ENCODE measurements at regions of chr14 and their contacts with region 1.

Region 1: GRCh38 chr14:89641495-89642175 is 224.6 kb upstream of the FOXN3 start:
- DNase-seq: peak; percentile 42
- H3K4me3 Mint-ChIP-seq: peak overlapping the region; percentile 50
- H3K27ac Mint-ChIP-seq: peak overlapping the region; percentile 93
- H3K4me1 Mint-ChIP-seq: peaks cover 65% of the 10 kb centered on the region
- H3K27me3 Mint-ChIP-seq: no peaks in the 10 kb centered on the region

Region 2: GRCh38 chr14:89625244-89625713 is 16.4 kb before region 1 on chr14:
- intact Hi-C with region 1: loop called (anchors 1 kb)
- DNase-seq: no peak
- H3K4me3 Mint-ChIP-seq: no peak overlapping the region
- H3K27ac Mint-ChIP-seq: peak overlapping the region; percentile 93
- H3K4me1 Mint-ChIP-seq: peaks cover 65% of the 10 kb centered on the region
- H3K27me3 Mint-ChIP-seq: no peaks in the 10 kb centered on the region

Measured in activated T-helper 2 cell treated with anti-CD3 and anti-CD28 coated beads, Interferon-gamma antibody, Interleukin-2, Interleukin-4, amounts not matched to agents 10 μg/mL and 5 μg/mL and 100 μg/mL, durations not matched to agents 14 hours and 24 hours and 36 hours (primary cell).